K562 (cell line): ENCODE measurements at regions of chr19 and their contacts with region 1.

Region 1: DNA sequence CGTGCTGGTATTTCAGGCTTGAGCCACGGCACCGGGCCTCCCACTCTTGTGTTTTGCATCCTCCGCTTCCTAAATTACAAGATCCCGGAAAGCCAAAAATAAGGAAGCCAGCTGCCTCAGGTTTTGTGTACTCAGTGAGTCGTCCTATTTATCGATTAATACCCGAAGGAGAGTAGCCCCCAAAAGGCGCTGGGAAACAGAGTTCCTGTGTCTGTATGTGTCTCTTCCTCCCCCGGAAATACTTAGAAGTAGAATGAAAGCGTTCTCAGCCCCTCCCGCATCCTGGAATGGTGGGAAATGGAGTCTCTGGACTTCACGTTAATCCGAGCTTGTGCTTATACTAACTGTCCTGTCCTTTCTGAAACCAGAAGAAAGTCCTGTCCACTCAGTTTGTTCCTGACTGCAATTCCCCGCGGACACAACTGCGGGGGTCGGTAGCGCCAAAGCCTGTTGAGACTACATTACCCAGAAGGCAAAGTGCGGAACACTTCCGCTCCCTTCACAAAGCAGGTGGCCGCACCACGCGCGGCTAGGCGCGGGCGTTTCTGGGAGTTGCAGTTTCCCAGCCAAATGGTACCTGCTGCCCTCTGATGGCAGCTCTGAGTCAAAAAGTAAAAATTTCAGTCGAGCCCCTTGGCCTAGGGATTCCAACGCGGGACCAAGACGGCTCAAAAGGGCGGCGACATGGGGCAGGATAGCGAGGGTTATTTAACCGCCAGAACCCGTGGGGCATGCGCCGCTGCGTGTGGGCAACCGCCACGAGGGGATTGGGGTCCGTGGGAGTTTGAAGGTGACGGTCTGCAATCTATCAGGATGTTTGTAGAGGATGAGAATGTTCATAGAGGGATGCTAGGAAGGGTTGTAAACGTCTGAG is 2.2 kb upstream of the GSK3A start:
- DNase-seq: peak; percentile 63 to 98 (median 72)
- ATAC-seq: peak; percentile 65
- H3K4me3 ChIP-seq: peak overlapping the region; percentile 79
- H3K27ac ChIP-seq: peak overlapping the region; percentile 84
- H3K4me1 ChIP-seq: peaks cover 7 to 35% of the 10 kb centered on the region in 2 experiments; a peak in 4 of 5 replicates
- H3K27me3 ChIP-seq: no peaks in the 10 kb centered on the region
- CTCF ChIP-seq: peak; percentile 78 to 87 (median 83)
- EP300 ChIP-seq: peak; percentile 4; the same call in 1 of the 2 replicates
- POLR2A ChIP-seq: peak; percentile 63
- RAD21 ChIP-seq: peak; percentile 44; a peak in 3 of 4 replicates

Region 2: DNA sequence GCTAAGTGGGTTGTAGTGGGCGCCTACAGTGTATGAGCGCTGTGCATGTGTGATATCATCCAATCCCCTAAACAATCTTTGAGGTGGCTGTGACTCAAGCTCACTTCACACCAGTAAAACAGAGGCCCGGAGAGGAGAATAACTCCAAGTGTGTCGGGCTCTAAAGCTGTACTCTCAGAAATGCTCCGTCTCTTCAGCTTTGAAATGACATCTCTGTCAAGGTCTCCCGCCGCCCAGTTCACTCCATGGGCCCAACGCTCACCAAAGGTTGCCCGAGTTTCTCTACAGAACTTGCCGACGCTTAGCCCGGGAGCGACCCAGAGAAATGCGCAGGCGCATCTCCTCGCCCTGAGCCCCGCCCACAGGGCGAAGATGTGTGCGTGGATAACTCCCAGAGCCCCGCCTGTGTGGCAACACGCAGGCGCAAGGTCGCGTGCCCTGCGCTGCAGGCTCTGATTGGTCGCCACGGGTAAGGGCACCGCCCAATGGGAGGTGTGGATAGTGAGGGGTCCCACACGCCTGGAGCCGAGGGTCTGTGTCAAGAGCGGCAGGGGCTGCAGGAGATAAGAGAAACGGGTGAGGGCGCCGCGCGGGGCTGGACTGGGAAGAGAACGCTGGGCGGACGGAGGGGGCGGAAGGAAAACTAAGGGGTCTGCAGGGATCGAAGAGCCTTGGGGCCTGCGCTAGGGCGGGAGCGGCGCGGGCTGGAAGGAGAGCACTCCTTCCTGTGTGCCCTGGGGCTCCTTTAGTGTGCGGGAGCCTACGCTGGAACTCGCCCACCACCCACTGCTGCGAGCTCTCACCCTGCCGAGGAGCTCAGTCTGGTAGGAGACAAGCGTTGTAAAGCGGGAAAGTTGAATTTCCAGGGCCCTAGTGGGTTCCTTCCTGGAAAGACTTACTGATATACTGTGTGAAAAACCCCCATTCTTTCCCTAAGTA is 24.5 kb before region 1 on chr19 and contains the start of gene ZNF526:
- CTCF ChIA-PET with region 1: no interaction called
- POLR2A ChIA-PET with region 1: interaction called, 116 read pairs
- in situ Hi-C with region 1: no loop called
- intact Hi-C with region 1: loop called (anchors 2 kb)
- DNase-seq: peak; percentile 98 to 100 (median 99)
- ATAC-seq: peak; percentile 91
- H3K4me3 ChIP-seq: peak within 1 kb of the TSS; percentile 79
- H3K27ac ChIP-seq: peak within 1 kb of the TSS; percentile 89
- H3K4me1 ChIP-seq: peaks cover 27 to 55% of the 10 kb centered on the region in 2 experiments
- H3K27me3 ChIP-seq: no peaks in the 10 kb centered on the region
- CTCF ChIP-seq: 0 out of 6 replicates have a peak, but pooled peaks of 1 of the 3 experiments have one; percentile 3
- EP300 ChIP-seq: peak; percentile 3; the same call in 1 of the 2 replicates
- POLR2A ChIP-seq: peak; percentile 94
- RAD21 ChIP-seq: no peak
- polyA plus RNA-seq, gene ZNF526: 1.3 to 2.2 TPM

Region 3: DNA sequence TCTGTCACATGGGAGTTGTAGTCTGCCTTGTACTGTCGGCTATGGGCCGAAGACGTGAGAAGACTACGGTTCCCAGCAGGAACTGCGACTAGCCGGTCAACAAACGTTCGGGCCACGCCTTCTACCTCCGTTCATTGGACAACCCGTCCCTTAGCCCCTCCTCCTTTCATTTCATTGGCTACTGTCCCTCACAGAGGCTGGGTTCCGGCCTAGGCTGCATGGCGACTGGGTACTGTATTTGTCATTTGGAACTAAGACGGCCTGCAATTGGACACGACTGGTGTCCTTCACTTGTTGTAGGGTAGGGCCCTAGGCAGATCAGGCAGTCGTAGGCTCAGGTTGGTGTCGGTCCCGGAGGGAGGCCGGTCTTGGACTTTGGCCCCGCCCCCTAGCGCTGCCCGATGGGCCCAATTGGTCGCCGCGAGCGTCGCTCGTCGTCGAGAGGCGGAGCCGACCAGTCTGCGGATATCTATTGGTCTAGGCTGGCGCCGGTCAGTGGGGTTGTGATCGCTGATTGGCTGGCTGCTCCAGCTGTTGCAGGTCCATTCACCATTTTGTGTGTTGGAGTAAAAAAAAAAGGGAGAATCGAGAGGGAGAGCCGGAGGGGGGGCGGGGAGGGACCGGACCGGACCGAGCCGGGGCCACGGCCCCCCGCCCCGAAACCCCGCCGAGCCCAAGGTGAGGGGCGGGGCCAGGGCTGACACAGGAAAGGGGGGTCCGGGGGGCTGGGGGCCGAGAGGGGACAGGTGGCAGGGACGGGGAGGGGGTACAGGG is 24.3 kb after region 1 on chr19 and contains the start of gene CIC:
- CTCF ChIA-PET with region 1: no interaction called
- POLR2A ChIA-PET with region 1: interaction called, 10 read pairs
- in situ Hi-C with region 1: no loop called
- intact Hi-C with region 1: no loop called
- DNase-seq: peak; percentile 85 to 100 (median 92)
- ATAC-seq: peak; percentile 92
- H3K4me3 ChIP-seq: peak within 1 kb of the TSS; percentile 54
- H3K27ac ChIP-seq: peak within 1 kb of the TSS; percentile 98
- H3K4me1 ChIP-seq: peaks cover 17 to 51% of the 10 kb centered on the region in 2 experiments
- H3K27me3 ChIP-seq: no peaks in the 10 kb centered on the region
- CTCF ChIP-seq: no peak
- EP300 ChIP-seq: no peak
- POLR2A ChIP-seq: no peak
- RAD21 ChIP-seq: no peak
- polyA plus RNA-seq, gene CIC: 0.07 to 0.13 TPM

Region 4: DNA sequence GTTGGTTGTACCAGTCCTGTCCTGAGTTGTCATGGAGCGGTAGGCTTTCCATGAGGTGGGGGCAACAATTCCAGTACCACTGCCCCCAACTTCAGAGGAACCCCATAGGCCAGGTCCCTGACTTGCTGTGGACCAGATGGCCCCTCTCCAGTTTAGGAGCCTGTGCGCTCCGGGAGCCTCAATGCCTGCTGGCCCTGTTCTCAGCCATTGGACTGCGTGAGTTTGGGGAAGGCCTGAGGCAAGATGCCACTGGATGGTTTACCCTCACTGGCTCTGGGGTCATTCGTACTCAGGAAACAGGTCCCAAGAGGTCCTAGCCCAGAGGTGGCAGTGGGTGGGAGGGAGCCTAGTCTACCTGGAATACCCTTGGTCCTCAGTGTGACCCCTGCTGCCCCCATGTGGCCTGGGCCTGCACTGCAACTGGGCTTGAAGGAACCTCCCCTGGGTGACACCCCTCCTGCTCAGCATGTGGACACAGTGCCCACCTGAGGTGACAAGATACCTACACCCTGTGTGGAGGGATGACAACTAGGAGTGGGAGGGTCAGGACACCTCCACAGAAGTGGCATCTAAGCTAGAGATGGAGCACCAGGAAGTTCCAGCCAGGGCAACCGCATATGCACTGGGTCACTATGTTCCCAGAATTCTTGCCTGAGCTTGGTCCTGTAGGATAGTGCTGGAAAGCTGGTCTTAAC is 51.4 kb after region 1 on chr19:
- CTCF ChIA-PET with region 1: interaction called, 5 read pairs
- POLR2A ChIA-PET with region 1: interaction called, 4 read pairs
- in situ Hi-C with region 1: no loop called
- intact Hi-C with region 1: loop called (anchors 5 kb)
- DNase-seq: peak; percentile 74 to 86 (median 78)
- ATAC-seq: peak; percentile 95
- H3K4me3 ChIP-seq: no peak overlapping the region
- H3K27ac ChIP-seq: no peak overlapping the region
- H3K4me1 ChIP-seq: peaks cover under 1 to 59% of the 10 kb centered on the region in 2 experiments; a peak in 4 of 5 replicates
- H3K27me3 ChIP-seq: no peaks in the 10 kb centered on the region
- CTCF ChIP-seq: peak; percentile 94 to 97 (median 97)
- EP300 ChIP-seq: no peak
- POLR2A ChIP-seq: peak; percentile 67
- RAD21 ChIP-seq: peak; percentile 38 to 80; a peak in 3 of 4 replicates

Region 5: DNA sequence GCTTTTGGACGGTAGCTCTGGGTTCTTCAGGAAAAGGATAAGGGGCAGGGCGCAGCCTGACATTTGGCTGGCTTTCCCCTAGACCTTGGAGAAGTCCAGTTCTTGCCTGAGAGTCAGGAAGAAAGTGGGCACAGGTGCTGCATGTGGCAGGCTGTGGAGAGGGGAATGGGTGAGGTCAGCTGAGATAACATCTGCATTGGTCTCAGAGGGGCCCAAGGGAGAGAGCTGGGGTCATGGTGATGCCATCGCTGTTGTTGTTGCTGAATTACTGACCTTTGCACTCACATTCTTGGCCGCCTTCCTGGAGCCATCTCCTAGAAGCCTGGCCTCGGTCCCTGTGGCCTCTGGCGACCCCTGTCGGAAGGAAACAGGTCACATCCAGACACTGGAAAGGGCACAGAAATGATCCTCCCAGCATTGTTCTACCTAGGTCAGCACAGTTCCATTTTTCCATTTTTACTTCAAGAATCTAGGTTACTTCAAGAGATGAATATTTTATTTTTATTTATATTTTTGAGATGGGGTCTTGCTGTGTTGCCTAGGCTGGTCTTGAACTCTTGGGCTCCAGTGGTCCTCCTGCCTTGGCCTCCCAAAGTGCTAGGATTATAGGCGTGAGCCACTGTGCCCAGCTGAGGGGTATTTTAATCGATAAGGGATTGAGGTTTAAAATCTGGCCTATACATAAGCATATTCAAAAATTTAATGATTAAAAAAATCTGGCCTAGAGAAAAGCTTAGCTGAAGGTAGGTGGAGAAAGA is 189.1 kb after region 1 on chr19:
- CTCF ChIA-PET with region 1: no interaction called
- POLR2A ChIA-PET with region 1: no interaction called
- in situ Hi-C with region 1: no loop called
- intact Hi-C with region 1: loop called (anchors 1 kb)
- DNase-seq: peak; percentile 61 to 88 (median 71)
- ATAC-seq: peak; percentile 98
- H3K4me3 ChIP-seq: no peak overlapping the region
- H3K27ac ChIP-seq: no peak overlapping the region
- H3K4me1 ChIP-seq: peaks cover 0 to 9% of the 10 kb centered on the region in 2 experiments; a peak in 2 of 5 replicates
- H3K27me3 ChIP-seq: no peaks in the 10 kb centered on the region
- CTCF ChIP-seq: peak; percentile 94 to 98 (median 95)
- EP300 ChIP-seq: no peak
- POLR2A ChIP-seq: no peak
- RAD21 ChIP-seq: peak; percentile 80 to 94

Region 6: GRCh38 chr19:42480335-42481095 is 235.9 kb after region 1 on chr19:
- CTCF ChIA-PET with region 1: no interaction called
- POLR2A ChIA-PET with region 1: no interaction called
- in situ Hi-C with region 1: no loop called
- intact Hi-C with region 1: no loop called
- DNase-seq: no peak
- ATAC-seq: no peak
- H3K4me3 ChIP-seq: no peak overlapping the region
- H3K27ac ChIP-seq: no peak overlapping the region
- H3K4me1 ChIP-seq: no peaks in the 10 kb centered on the region
- H3K27me3 ChIP-seq: peaks cover 4 to 5% of the 10 kb centered on the region in 2 experiments; a peak in 3 of 5 replicates
- CTCF ChIP-seq: no peak
- EP300 ChIP-seq: no peak
- POLR2A ChIP-seq: no peak
- RAD21 ChIP-seq: no peak

Region 7: GRCh38 chr19:42596391-42597072 is 351.9 kb after region 1 on chr19:
- CTCF ChIA-PET with region 1: no interaction called
- POLR2A ChIA-PET with region 1: no interaction called
- in situ Hi-C with region 1: no loop called
- intact Hi-C with region 1: no loop called
- DNase-seq: peak; percentile 47 to 78 (median 68)
- ATAC-seq: peak; percentile 95
- H3K4me3 ChIP-seq: no peak overlapping the region
- H3K27ac ChIP-seq: no peak overlapping the region
- H3K4me1 ChIP-seq: peaks cover 0 to 5% of the 10 kb centered on the region in 2 experiments; a peak in 1 of 5 replicates
- H3K27me3 ChIP-seq: peaks cover 0 to 4% of the 10 kb centered on the region in 2 experiments; a peak in 1 of 5 replicates
- CTCF ChIP-seq: peak; percentile 81 to 92 (median 84)
- EP300 ChIP-seq: no peak
- POLR2A ChIP-seq: no peak
- RAD21 ChIP-seq: peak; percentile 17 to 66; a peak in 2 of 4 replicates